Gastrocnemius medialis (tissue), 4 donors: ENCODE measurements at regions of chr17 and their contacts with region 1.

Region 1: GRCh38 chr17:4966844-4967538 is 626 bp downstream of the SPAG7 start:
- DNase-seq: peak; percentile 100
- ATAC-seq: peak; percentile 85 to 90
- H3K4me3 ChIP-seq: peak overlapping the region; percentile 70 to 87 (median 75)
- H3K27ac ChIP-seq: peak overlapping the region; percentile 88 to 95 (median 94)
- H3K4me1 ChIP-seq: peaks cover 27 to 34% of the 10 kb centered on the region in 2 donors
- H3K27me3 ChIP-seq: no peaks in the 10 kb centered on the region
- CTCF ChIP-seq: peak in 1 of 5 experiments; percentile 3
- POLR2A ChIP-seq: peak; percentile 47 to 68

Region 2: GRCh38 chr17:4948931-4949320 is 18.1 kb before region 1 on chr17:
- in situ Hi-C with region 1: no loop called
- intact Hi-C with region 1: loop called (anchors 1 kb)
- DNase-seq: peak; percentile 71 to 86
- ATAC-seq: peak; percentile 47 to 53
- H3K4me3 ChIP-seq: peak overlapping the region; percentile 85 to 99 (median 96)
- H3K27ac ChIP-seq: peak overlapping the region; percentile 96 to 100 (median 98)
- H3K4me1 ChIP-seq: peaks cover 58 to 64% of the 10 kb centered on the region in 2 donors
- H3K27me3 ChIP-seq: no peaks in the 10 kb centered on the region
- CTCF ChIP-seq: no peak
- POLR2A ChIP-seq: peak; percentile 15 to 78